Mammary epithelial cell (primary cell): ENCODE measurements at regions of chr15 and their contacts with region 1.

Region 1: GRCh38 chr15:72358650-72359288 is 17.0 kb downstream of the HEXA start:
- DNase-seq: peak; percentile 86
- H3K4me3 ChIP-seq: peak overlapping the region in 1 of 3 experiments; percentile 0
- H3K27ac ChIP-seq: no peak overlapping the region
- H3K4me1 ChIP-seq: peaks cover 16% of the 10 kb centered on the region
- H3K27me3 ChIP-seq: no peaks in the 10 kb centered on the region
- CTCF ChIP-seq: no peak

Region 2: DNA sequence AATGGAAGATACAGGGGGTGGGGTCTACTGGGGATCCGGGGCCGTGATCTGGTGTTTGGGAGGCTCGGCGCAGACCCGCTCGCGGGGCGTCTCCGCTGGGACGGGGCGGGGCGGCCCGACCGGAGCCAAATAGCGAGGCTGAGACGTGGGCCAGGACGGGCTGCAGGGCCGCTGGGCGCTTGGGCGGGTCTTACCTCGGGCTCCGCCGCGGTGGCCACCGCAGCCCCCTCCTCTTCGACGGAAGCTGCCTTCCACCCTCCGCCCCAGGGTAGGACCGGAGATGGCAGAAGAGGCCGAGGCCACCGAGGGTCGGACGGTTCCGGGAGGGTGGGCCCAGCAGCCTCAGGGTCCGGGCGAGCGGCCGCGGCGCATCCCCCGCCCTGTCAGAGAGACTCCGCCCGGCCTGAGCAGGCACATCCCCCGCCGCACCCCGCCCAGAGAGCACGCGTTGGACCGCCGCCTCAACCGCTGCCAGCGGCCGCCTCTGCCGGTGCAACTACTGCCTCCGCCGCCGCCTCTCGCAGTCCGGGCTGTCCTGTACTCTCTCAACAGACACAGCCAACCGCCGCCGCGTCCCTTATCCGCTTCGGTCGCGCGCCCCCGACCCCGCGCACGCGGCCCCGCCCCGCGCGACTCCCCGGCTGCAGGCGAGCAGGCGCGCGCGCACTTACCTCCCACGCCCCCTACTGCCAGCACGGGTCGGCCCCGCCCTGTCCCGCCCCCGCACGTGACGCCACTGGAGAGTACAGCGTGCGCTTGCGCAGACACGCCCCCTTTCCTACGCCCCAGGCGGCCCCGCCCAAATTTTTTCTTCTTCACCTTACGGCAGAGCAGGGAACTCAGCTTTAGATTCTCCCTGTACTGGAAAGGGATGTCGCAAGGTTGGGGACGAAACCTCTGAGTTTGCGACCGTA is 241.0 kb before region 1 on chr15 and contains the start of gene MYO9A:
- CTCF ChIA-PET with region 1: no interaction called
- dilution Hi-C with region 1: no loop called
- in situ Hi-C with region 1: no loop called
- intact Hi-C with region 1: no loop called
- DNase-seq: peak; percentile 97
- H3K4me3 ChIP-seq: peak within 1 kb of the TSS; percentile 88 to 98 (median 93)
- H3K27ac ChIP-seq: peak within 1 kb of the TSS; percentile 97
- H3K4me1 ChIP-seq: peaks cover 3% of the 10 kb centered on the region
- H3K27me3 ChIP-seq: no peaks in the 10 kb centered on the region
- CTCF ChIP-seq: no peak
- total RNA-seq, gene MYO9A: 43.2 to 55.2 TPM

Region 3: GRCh38 chr15:72345280-72345679 is 13.5 kb before region 1 on chr15:
- CTCF ChIA-PET with region 1: no interaction called
- dilution Hi-C with region 1: no loop called
- in situ Hi-C with region 1: no loop called
- intact Hi-C with region 1: no loop called
- DNase-seq: no peak
- H3K4me3 ChIP-seq: no peak overlapping the region
- H3K27ac ChIP-seq: no peak overlapping the region
- H3K4me1 ChIP-seq: no peaks in the 10 kb centered on the region
- H3K27me3 ChIP-seq: no peaks in the 10 kb centered on the region
- CTCF ChIP-seq: no peak

Region 4: DNA sequence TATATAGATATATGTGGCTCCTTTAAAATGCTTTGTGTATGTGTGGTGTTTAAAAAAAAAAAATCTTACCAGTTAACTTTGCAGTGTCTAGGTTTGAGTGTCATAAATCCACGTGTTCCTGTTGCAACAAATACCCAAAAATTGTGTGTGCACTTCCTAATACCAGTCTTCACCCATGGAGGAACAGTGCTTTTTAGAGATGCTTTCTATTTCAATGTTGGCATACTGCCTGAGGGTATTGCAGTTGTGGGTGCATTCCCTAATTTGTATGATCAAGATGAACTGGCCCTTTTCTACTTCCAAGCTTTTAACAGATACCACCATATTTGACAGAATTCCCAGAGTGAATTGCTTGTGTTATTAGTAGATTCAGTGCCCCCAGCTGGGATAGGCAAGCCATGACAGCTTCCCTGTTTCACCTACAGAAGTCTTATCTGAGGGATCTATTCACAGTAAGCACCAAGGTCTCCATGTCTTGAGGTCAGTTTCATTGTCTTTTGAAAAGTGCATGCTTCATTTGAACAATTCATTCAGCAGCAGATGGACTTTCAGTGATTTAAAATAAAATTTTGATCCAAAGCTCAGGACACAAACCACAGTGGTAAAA is 226.8 kb after region 1 on chr15:
- CTCF ChIA-PET with region 1: no interaction called
- dilution Hi-C with region 1: no loop called
- in situ Hi-C with region 1: no loop called
- intact Hi-C with region 1: loop called (anchors 10 kb)
- DNase-seq: peak; percentile 8
- H3K4me3 ChIP-seq: no peak overlapping the region
- H3K27ac ChIP-seq: no peak overlapping the region
- H3K4me1 ChIP-seq: no peaks in the 10 kb centered on the region
- H3K27me3 ChIP-seq: no peaks in the 10 kb centered on the region
- CTCF ChIP-seq: peak; percentile 5 to 40